MCF 10A (cell line): ENCODE measurements at regions of chr10 and their contacts with region 1.

Region 1: DNA sequence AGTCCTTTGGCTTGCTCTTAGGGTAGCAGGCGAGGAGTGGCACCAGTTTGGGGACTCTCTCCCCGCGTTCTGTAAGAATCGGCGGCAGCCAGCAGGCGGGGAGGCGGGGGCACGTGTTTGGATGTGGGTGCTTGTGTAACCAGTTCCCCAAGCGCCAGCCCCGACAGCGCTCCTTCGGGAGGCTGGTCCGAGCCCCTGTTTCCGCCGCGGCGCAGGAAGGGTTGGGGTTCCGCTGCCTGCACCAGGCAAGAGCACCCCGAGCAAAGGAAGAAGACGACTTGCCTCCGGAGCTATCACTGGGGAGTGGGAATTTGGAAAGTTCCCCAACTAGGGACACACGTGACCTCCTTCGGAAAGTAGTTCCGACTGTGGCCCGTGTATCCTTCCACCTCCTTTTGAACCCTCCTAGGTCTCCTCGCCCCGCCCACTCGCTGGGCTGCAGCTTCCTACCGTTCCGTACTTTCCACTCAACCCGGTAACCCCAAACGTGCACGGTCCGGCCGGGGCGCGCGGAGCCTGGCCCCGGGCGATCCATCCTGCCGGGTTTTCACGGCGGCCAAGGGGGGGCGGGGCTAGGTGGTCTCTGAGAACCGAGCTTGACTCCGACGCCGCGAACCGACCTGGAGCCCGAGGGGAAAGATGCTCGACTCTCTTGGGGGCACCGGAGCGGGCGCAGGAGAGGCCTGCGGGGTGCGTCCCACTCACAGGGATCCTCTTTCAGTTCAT is 1.2 kb downstream of the KLLN start:
- DNase-seq: peak; percentile 98
- H3K4me3 Mint-ChIP-seq: peak overlapping the region; percentile 87
- H3K27ac Mint-ChIP-seq: peak overlapping the region; percentile 83
- H3K4me1 Mint-ChIP-seq: peaks cover 16% of the 10 kb centered on the region
- H3K27me3 Mint-ChIP-seq: no peaks in the 10 kb centered on the region
- CTCF ChIP-seq: no peak

Region 2: DNA sequence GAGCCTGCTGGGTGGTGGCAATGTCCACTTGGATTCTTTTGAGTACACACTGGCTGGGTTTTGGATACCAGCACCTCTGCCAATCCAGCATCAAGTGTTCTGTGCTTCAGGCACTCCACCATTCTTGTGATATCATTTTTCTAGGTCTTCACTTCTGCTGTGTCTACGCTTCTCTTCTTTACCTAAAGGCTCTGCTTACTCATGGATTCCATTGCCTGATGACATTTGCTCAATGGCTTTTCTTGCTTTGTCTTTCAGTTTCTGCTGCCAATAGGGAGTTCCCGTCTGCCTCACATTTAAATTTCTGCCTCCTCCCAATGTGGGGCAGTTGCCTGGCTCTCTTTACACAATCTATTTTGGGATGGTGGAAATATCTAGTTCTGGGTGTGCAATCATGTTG is 215.2 kb before region 1 on chr10:
- CTCF ChIA-PET with region 1: no interaction called
- POLR2A ChIA-PET with region 1: no interaction called
- intact Hi-C with region 1: no loop called
- DNase-seq: no peak
- H3K4me3 Mint-ChIP-seq: no peak overlapping the region
- H3K27ac Mint-ChIP-seq: no peak overlapping the region
- H3K4me1 Mint-ChIP-seq: no peaks in the 10 kb centered on the region
- H3K27me3 Mint-ChIP-seq: no peaks in the 10 kb centered on the region
- CTCF ChIP-seq: no peak

Region 3: DNA sequence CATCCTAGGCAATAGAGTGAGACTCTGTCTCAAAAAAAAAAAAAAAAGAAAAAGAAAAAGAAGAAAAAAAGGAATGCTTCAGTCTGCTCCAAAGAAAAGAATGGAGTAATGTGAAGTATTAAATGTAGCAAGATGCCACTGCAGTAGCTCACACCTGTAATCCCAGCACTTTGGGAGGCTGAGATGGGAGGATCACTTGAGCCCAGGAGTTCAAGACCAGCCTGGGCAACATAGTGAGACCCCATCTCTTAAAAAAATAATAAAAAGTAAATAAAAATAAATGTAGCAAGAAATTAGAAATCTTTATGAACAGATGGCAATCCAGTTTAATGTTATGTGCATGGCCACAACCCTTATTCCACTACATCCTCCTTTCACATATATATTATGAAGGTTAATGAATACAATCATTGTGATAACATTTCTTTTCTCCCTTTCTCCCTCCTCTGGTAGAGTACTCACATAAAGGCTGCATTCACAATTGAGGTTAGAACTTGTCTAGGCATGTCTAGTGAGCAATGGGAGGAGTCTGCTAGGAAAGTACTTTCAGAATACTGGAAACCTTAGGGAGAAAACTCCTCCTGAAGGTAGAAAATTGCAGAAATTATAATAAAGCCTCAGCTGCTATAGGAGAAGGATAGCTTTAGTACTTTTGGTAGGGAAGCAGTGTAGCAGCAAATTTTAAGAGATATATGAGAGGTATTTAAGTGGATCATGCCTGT is 19.2 kb before region 1 on chr10:
- CTCF ChIA-PET with region 1: interaction called, 9 read pairs
- POLR2A ChIA-PET with region 1: interaction called, 104 read pairs
- intact Hi-C with region 1: no loop called
- DNase-seq: peak; percentile 81
- H3K4me3 Mint-ChIP-seq: peak overlapping the region; percentile 66
- H3K27ac Mint-ChIP-seq: peak overlapping the region; percentile 95
- H3K4me1 Mint-ChIP-seq: peaks cover 28% of the 10 kb centered on the region
- H3K27me3 Mint-ChIP-seq: no peaks in the 10 kb centered on the region
- CTCF ChIP-seq: no peak

Region 4: DNA sequence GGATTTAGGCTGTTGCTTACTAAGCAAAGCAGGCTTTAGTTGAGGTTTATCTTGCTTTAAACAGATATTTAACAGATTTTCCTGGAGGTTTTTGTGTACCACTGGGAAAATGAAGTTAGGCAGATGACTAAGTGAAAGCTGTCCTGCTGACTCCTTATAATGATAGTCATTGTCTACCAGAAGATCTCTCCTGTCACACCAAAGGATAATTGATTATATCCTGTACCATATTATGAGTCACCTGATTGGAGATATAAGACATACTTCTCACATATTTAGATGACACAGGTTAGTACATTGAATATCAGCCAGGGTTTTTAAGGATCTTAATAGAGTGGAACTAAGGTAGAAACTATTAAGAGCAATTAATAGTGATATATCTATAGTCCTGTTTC is 69.7 kb after region 1 on chr10:
- CTCF ChIA-PET with region 1: no interaction called
- POLR2A ChIA-PET with region 1: interaction called, 9 read pairs
- intact Hi-C with region 1: loop called (anchors 5 kb)
- DNase-seq: no peak
- H3K4me3 Mint-ChIP-seq: no peak overlapping the region
- H3K27ac Mint-ChIP-seq: peak overlapping the region; percentile 16
- H3K4me1 Mint-ChIP-seq: peaks cover 25% of the 10 kb centered on the region
- H3K27me3 Mint-ChIP-seq: no peaks in the 10 kb centered on the region
- CTCF ChIP-seq: no peak

Region 5: DNA sequence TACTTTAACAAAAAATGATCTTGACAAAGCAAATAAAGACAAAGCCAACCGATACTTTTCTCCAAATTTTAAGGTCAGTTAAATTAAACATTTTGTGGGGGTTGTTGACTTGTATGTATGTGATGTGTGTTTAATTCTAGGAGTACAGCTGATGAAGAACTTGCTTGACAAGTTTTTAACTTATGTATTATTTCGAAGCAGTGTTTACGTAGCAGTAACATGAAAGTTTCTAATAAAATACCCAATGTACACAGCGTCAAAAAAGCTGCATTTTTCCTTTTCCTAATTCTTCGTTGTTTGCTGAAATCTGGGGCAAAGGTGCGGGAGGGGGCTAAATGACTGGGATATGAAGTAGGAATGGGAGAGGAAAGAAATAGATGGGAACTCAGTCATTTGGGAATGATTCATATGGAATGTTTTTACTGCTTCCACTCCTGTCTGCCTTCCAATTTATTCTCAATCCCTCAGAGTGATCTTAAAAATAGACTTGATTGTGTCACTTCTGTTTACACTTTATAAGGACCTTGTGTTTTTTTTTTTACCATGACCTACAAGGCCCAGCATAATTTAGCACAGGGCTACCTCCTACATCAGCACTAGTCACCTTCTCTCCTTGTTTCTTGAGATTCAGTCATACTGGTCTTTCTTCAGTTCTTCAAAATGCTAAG is 99.1 kb after region 1 on chr10:
- CTCF ChIA-PET with region 1: no interaction called
- POLR2A ChIA-PET with region 1: no interaction called
- intact Hi-C with region 1: no loop called
- DNase-seq: peak; percentile 53
- H3K4me3 Mint-ChIP-seq: no peak overlapping the region
- H3K27ac Mint-ChIP-seq: peak overlapping the region; percentile 68
- H3K4me1 Mint-ChIP-seq: peaks cover 16% of the 10 kb centered on the region
- H3K27me3 Mint-ChIP-seq: no peaks in the 10 kb centered on the region
- CTCF ChIP-seq: no peak

Region 6: DNA sequence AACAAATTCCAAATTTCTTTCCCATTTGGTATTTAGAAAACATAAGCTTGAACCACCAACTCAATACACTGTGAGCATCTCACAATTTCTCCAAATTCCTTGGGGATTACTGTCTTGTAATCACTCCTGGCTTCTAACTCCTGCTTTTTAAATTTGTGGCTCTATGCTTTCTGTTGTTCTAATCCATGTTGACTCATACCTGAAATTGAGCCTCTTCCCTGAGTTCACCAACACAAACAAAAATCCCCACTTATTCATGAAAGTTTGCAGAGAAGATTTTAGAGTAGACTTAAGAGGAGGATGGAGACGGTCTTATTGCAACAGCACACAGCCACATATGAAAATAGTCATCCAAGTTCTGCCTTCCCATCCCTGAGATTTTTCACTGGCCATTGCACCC is 253.9 kb after region 1 on chr10:
- CTCF ChIA-PET with region 1: interaction called, 4 read pairs
- POLR2A ChIA-PET with region 1: interaction called, 3 read pairs
- intact Hi-C with region 1: loop called (anchors 1 kb)
- DNase-seq: peak; percentile 36
- H3K4me3 Mint-ChIP-seq: no peak overlapping the region
- H3K27ac Mint-ChIP-seq: no peak overlapping the region
- H3K4me1 Mint-ChIP-seq: no peaks in the 10 kb centered on the region
- H3K27me3 Mint-ChIP-seq: no peaks in the 10 kb centered on the region
- CTCF ChIP-seq: no peak

Region 7: DNA sequence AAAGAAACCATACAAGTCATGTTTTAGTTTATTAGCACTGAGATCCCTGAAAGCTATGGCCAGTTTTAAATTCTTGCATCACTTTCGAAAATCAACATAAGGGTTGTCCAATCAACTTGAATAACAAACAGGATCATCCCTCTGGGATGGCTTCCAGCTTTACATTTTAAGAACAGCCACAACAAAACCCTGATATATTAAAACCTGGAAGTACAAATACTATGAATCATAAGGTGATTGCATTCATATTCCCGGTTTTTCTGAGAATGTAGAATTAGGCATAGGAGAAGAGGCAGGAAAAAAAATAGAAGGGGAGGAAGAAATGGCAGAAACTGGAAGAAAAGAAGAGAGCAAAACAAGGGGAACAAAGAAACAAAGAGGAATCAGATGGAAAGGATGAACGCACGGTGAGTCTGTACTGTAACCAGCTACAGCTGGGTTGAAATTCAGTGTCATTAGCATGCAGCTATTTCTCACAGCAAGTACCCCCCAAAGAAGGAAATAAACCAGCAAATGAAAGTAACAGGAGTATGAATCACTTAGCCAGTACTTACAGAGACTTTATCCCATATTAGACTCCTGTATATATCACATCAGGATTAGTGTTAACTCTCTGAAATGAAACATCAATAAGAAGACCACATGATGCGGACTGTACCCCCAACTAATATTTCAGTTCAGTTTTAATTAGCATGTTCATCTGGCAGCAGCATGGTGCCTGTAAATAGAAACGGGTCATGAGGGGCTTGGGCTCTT is 419.7 kb after region 1 on chr10:
- CTCF ChIA-PET with region 1: interaction called, 3 read pairs
- POLR2A ChIA-PET with region 1: interaction called, 3 read pairs
- intact Hi-C with region 1: loop called (anchors 5 kb)
- DNase-seq: peak; percentile 91
- H3K4me3 Mint-ChIP-seq: peak overlapping the region; percentile 57
- H3K27ac Mint-ChIP-seq: peak overlapping the region; percentile 86
- H3K4me1 Mint-ChIP-seq: peaks cover 11% of the 10 kb centered on the region
- H3K27me3 Mint-ChIP-seq: no peaks in the 10 kb centered on the region
- CTCF ChIP-seq: no peak

Region 8: GRCh38 chr10:88553116-88553752 is 691.1 kb after region 1 on chr10:
- CTCF ChIA-PET with region 1: interaction called, 8 read pairs
- POLR2A ChIA-PET with region 1: interaction called, 17 read pairs
- intact Hi-C with region 1: loop called (anchors 1 kb)
- DNase-seq: peak; percentile 77
- H3K4me3 Mint-ChIP-seq: no peak overlapping the region
- H3K27ac Mint-ChIP-seq: no peak overlapping the region
- H3K4me1 Mint-ChIP-seq: peaks cover 16% of the 10 kb centered on the region
- H3K27me3 Mint-ChIP-seq: no peaks in the 10 kb centered on the region
- CTCF ChIP-seq: peak; percentile 69